AG04450 (cell line): ENCODE measurements at regions of chr22 and their contacts with region 1.

Region 1: GRCh38 chr22:32796865-32797573 is 4.5 kb upstream of the TIMP3 start:
- DNase-seq: peak; percentile 63
- H3K4me3 ChIP-seq: 0 out of 2 replicates have a peak overlapping the region, but pooled peaks have one; percentile 18
- H3K27ac ChIP-seq: peak overlapping the region; percentile 13
- H3K27me3 ChIP-seq: no peaks in the 10 kb centered on the region
- CTCF ChIP-seq: peak; percentile 93

Region 2: DNA sequence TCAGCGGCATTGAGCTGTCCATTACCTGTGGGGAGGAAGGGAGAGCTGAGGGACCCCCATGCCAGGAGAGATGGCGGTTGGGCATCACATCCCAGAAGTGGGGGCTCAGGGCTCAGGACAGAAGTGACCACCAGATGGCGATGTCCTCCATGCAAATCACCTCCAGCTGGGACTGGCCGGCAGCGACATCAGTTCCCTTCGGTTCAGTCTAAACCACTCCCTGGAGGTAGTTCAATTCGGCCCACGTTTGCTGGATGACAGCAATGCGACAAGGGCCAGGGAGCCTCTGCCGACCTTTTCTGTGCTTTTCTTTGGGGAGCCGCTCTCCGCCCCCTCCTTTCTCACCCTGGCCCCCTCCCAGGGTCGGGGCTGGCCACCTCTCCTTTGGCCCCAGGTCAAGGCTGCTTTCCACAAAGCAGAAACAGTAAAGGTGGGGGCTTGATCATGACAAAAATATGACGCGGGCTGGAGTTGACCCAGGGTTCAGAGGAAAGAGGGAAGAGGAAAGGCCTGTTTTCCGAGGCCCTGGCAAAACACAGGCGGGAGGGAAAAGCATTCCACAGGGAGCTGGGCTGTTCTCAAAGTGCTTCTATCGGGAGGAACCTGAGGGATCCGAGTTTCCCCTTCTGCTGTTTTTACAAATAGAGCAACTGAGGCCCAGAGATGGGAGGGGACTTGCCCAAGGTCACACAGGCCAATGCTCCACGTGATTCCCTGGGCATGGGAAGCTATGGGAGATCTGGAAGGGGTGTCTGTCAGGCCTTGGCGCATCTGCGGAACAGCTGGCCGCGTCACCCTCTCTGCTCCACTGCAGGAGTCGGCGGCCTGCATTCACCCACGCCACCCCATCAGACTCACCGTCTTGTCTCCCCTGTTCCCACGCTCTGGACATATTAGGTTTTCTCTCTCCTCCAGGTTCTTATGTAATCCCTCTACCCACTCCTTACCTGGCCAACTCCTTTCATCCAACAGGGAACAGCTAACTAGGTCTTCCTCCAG is 267.7 kb before region 1 on chr22:
- CTCF ChIA-PET with region 1: interaction called, 330 read pairs
- POLR2A ChIA-PET with region 1: interaction called, 37 read pairs
- DNase-seq: peak; percentile 77
- H3K4me3 ChIP-seq: no peak overlapping the region
- H3K27ac ChIP-seq: no peak overlapping the region
- H3K27me3 ChIP-seq: peaks cover 4% of the 10 kb centered on the region
- CTCF ChIP-seq: peak; percentile 86

Region 3: DNA sequence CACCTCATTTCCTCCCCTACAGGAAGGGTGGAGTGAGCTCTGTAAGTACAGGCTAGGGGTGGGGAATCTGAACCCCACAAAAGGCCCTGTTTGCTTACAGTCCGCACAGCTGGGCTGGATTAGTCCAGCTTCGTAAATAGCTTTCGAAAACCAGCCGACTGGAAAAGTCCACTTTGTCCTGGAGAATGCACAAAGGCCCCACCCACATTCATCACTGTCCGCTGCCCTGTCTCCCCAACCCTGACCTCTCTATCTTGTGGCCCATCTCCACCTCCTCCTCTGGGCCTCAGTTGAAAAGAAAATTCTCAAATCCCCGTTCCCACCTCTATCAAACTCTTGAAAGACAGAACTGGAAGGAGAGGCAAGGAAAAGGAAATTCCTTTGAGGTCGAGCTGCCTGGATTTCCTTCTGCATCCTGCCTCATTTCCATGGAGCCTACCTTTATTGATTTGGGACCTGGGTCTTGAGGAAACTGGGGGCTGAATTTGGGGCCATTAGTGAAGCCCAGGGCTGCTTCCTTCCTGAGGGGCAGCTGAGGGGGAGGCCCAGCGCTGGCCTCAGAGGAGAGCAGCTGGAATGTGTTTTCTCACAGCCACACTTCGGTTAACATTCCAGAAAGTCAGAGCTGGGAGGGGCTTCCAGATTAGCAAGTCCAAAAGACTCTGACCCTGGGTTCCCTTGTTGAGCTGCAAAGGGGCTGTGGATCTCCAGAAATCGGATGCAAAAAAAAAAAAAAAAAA is 174.8 kb before region 1 on chr22:
- CTCF ChIA-PET with region 1: interaction called, 127 read pairs
- POLR2A ChIA-PET with region 1: interaction called, 39 read pairs
- DNase-seq: peak; percentile 94
- H3K4me3 ChIP-seq: peak overlapping the region; percentile 25
- H3K27ac ChIP-seq: peak overlapping the region; percentile 98
- H3K27me3 ChIP-seq: no peaks in the 10 kb centered on the region
- CTCF ChIP-seq: no peak

Region 4: DNA sequence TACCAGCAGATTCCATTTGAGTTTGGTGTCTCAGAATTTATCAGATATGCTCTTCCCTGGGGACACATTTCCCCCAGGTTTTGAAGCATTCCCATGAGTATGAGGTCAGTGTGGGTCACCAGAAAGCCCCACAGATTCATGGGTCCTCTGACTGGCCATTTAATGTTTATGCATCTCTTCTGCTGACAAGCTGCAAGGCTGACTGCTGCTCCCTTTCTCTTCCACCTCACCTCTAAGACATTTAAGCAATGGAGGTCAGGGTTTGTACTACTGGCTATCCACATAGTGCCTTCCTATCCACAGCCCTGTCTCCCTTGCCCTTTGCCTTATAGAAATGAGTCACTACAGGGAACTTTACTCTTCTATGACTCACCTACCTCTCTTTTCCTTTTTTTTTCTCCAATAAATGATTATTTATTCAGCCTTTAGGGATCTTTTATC is 101.5 kb before region 1 on chr22:
- CTCF ChIA-PET with region 1: interaction called, 10 read pairs
- POLR2A ChIA-PET with region 1: interaction called, 3 read pairs
- DNase-seq: peak; percentile 55
- H3K4me3 ChIP-seq: no peak overlapping the region
- H3K27ac ChIP-seq: peak overlapping the region; percentile 66
- H3K27me3 ChIP-seq: no peaks in the 10 kb centered on the region
- CTCF ChIP-seq: no peak

Region 5: DNA sequence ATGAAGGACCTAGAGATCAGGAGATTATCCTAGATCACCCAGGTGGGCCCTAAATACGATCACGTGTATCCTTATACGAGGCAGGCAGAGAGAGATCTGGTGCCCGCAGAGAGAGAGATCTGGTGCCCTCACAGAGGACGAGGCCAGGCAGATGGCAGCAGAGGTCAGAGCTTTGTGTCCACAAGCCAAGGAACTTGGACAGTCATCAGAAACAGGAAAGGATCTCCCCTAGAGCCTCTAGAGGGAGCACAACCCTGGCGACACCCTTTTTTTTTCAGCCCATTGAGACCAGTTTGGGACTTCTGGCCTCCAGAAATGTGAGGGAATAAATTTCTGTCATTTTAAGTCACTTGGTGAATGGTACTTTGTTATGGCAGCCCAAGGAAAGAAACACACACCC is 21.1 kb before region 1 on chr22:
- CTCF ChIA-PET with region 1: interaction called, 41 read pairs
- POLR2A ChIA-PET with region 1: no interaction called
- DNase-seq: no peak
- H3K4me3 ChIP-seq: no peak overlapping the region
- H3K27ac ChIP-seq: no peak overlapping the region
- H3K27me3 ChIP-seq: peaks cover 6% of the 10 kb centered on the region
- CTCF ChIP-seq: peak; percentile 37; the same call in 1 of the 2 replicates

Region 6: DNA sequence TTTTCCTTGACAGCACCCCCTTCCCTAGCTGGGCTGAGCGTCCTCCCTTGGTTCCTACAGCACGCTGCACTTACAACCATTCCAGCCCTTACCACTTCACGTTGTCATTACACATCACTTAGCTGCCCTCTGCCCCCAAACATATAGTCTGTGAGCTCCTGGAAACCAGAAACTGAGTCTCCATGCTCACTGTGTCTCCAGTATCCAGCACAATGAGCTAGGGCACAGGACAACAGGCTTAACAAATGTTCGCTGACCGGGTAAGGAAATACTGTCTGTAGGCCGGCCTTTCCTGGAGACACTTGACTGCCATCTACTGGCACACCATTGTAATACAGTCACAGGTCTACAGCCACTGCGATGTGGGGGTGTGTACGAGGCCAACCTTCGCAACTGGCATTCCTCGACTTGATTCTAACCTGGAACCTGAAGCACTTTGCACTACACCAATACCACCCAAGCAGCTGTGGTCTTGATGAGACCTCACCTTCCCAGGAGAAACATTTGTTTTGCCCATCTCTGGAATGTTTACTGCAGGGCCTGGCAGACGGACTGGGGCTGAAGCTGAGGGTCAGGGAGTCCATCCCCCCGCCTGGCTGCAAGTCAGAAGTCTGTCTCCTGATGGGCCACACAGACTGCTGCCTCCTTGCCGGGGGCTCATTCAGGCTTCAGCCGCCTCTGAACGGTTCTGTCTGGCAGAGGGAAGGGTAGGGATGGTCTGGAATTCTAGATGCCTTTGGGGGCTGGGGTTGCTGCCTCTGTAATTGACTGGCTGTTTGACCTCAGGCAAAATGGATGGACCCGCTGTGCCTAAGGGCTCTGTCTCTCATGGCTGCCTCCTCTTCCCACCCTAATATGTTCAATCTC is 189.1 kb after region 1 on chr22:
- CTCF ChIA-PET with region 1: interaction called, 9 read pairs
- POLR2A ChIA-PET with region 1: interaction called, 10 read pairs
- DNase-seq: peak; percentile 44
- H3K4me3 ChIP-seq: no peak overlapping the region
- H3K27ac ChIP-seq: no peak overlapping the region
- H3K27me3 ChIP-seq: peaks cover 6% of the 10 kb centered on the region
- CTCF ChIP-seq: peak; percentile 92